ENCODE measurements at regions of chr1 and their contacts with region 1.

Region 1: GRCh38 chr1:96498744-96499340 is 222.7 kb upstream of the PTBP2 start:
- DNase-seq: no peak
- ATAC-seq: no peak
- H3K4me3 ChIP-seq: no peak overlapping the region
- H3K27ac ChIP-seq: no peak overlapping the region
- H3K4me1 ChIP-seq: no peaks in the 10 kb centered on the region
- CTCF ChIP-seq: no peak
- EP300 ChIP-seq: no peak
- POLR2A ChIP-seq: no peak
- RAD21 ChIP-seq: no peak

Region 2: GRCh38 chr1:96487394-96487793 is 11.4 kb before region 1 on chr1:
- CTCF ChIA-PET with region 1: no interaction called
- POLR2A ChIA-PET with region 1: no interaction called
- DNase-seq: no peak
- ATAC-seq: no peak
- H3K4me3 ChIP-seq: no peak overlapping the region
- H3K27ac ChIP-seq: no peak overlapping the region
- H3K4me1 ChIP-seq: no peaks in the 10 kb centered on the region
- CTCF ChIP-seq: no peak
- EP300 ChIP-seq: no peak
- POLR2A ChIP-seq: no peak
- RAD21 ChIP-seq: no peak

Region 3: GRCh38 chr1:96688767-96689166 is 189.9 kb after region 1 on chr1:
- CTCF ChIA-PET with region 1: no interaction called
- POLR2A ChIA-PET with region 1: no interaction called
- DNase-seq: no peak
- ATAC-seq: no peak
- H3K4me3 ChIP-seq: no peak overlapping the region
- H3K27ac ChIP-seq: no peak overlapping the region
- H3K4me1 ChIP-seq: no peaks in the 10 kb centered on the region
- CTCF ChIP-seq: no peak
- EP300 ChIP-seq: no peak
- POLR2A ChIP-seq: no peak
- RAD21 ChIP-seq: no peak

Region 4: GRCh38 chr1:96771847-96772246 is 273.0 kb after region 1 on chr1:
- CTCF ChIA-PET with region 1: no interaction called
- POLR2A ChIA-PET with region 1: no interaction called
- DNase-seq: no peak
- ATAC-seq: no peak
- H3K4me3 ChIP-seq: no peak overlapping the region
- H3K27ac ChIP-seq: no peak overlapping the region
- H3K4me1 ChIP-seq: no peaks in the 10 kb centered on the region
- CTCF ChIP-seq: no peak
- EP300 ChIP-seq: no peak
- POLR2A ChIP-seq: no peak
- RAD21 ChIP-seq: no peak

Region 5: DNA sequence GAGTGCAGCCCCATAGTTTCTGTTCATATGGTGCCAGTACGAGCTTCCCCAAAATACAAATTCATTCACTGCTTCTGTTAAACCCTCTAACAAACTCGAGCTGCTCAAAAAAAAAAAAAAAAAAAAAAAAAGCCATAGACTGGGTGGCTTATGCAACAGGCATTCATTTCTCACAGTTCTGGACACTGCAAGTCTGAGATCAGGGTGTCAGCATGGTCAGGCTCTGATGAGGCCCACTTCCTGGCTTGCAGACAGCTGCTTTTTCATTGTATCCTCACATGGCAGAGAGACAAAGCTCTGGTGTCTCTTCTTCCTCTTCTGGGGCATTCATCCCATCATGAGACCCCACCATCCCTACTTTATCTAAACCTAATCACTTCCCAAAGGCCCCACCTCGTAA is 344.4 kb after region 1 on chr1:
- CTCF ChIA-PET with region 1: no interaction called
- POLR2A ChIA-PET with region 1: interaction called, 10 read pairs
- DNase-seq: no peak
- ATAC-seq: no peak
- H3K4me3 ChIP-seq: no peak overlapping the region
- H3K27ac ChIP-seq: no peak overlapping the region
- H3K4me1 ChIP-seq: no peaks in the 10 kb centered on the region
- CTCF ChIP-seq: no peak
- EP300 ChIP-seq: no peak
- POLR2A ChIP-seq: no peak
- RAD21 ChIP-seq: no peak

Measured in A549 (cell line).